Endothelial cell of umbilical vein (primary cell): ENCODE measurements at regions of chr2 and their contacts with region 1.

Region 1: GRCh38 chr2:164061129-164061746 is 325.4 kb upstream of the FIGN start:
- DNase-seq: peak; percentile 61
- H3K4me3 ChIP-seq: no peak overlapping the region
- H3K27ac ChIP-seq: no peak overlapping the region
- H3K4me1 ChIP-seq: no peaks in the 10 kb centered on the region
- H3K27me3 ChIP-seq: no peaks in the 10 kb centered on the region
- CTCF ChIP-seq: peak; percentile 53 to 58
- POLR2A ChIP-seq: no peak

Region 2: DNA sequence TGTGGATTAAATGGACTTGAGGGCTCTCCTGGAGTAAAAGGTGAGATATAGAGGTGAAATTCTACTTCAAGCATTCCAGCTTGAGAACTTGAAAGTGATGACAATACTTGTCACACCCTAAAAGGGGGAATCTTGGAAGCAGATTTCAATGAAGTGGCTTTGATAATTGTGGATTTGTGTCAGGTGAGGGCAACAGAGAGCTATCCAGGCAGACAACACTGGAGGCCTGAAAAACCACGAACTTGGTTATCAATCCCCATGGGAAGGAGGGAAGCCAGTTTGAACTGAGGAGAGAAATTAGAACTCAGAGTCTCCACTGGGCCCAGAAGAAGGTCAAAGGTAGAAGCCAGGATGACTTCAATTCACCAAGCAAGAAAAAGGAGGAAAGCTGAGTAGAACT is 589.3 kb before region 1 on chr2:
- CTCF ChIA-PET with region 1: interaction called, 29 read pairs
- POLR2A ChIA-PET with region 1: no interaction called
- dilution Hi-C with region 1: no loop called
- intact Hi-C with region 1: loop called (anchors 1 kb)
- DNase-seq: peak; percentile 18
- H3K4me3 ChIP-seq: no peak overlapping the region
- H3K27ac ChIP-seq: no peak overlapping the region
- H3K4me1 ChIP-seq: no peaks in the 10 kb centered on the region
- H3K27me3 ChIP-seq: peaks cover 2 to 3% of the 10 kb centered on the region in 2 experiments
- CTCF ChIP-seq: peak in 1 of 2 donors; percentile 22
- POLR2A ChIP-seq: no peak

Region 3: DNA sequence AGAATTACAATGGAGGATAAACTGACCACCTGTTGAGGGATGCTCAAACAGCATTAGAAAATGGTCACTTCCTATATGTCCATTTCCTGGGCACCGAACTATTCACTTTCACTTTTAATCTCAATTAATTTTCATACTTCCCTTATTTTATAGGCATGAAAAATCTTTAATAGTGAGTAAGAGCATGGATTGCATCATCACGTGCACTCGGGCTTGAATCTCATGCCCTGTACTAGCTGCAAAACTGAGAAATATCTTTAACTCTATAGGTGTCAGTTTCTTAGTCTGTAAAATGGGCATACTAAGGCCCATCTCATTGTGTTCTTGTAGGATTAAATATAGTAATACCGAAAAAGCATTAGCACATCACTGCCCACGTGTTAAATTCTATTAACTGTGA is 141.5 kb before region 1 on chr2:
- CTCF ChIA-PET with region 1: no interaction called
- POLR2A ChIA-PET with region 1: no interaction called
- dilution Hi-C with region 1: no loop called
- intact Hi-C with region 1: no loop called
- DNase-seq: no peak
- H3K4me3 ChIP-seq: no peak overlapping the region
- H3K27ac ChIP-seq: no peak overlapping the region
- H3K4me1 ChIP-seq: no peaks in the 10 kb centered on the region
- H3K27me3 ChIP-seq: no peaks in the 10 kb centered on the region
- CTCF ChIP-seq: no peak
- POLR2A ChIP-seq: no peak

Region 4: DNA sequence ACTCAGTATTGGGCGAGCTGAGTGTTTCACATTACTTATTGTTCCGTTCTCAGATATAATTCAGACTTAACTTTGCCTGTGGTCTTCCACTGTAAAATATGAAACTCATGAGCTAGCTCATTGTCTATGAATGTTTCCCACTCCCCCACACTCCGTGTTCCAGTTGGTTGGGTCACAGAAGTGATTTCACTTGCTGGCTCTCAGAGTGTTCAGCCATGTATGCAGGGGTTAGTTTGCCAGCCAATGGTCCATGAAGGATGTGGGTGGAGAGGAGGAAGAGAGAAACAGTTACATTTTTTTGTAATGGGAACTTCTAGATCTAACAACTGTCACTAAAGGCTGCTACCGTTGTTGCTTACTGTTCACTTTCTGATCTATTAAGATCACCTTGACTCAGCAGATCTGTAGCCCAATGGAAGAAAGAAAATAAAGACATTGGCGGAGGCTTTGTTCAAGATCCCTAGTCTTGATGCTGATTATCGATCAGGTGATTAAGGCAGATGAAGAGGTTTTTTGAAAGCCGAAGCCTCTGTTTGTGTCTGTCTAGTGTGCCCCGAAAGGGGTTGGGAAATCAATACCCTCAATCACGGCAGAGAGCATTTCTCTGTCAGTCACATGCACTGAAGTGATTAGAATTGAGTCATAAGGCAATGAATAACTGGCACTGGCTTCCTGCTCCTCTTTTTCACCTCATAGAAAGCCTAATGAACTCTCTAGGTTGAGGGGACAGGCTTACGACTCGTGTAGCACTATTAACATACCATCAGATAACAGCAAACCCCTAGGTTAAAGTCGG is 45.7 kb before region 1 on chr2:
- CTCF ChIA-PET with region 1: no interaction called
- POLR2A ChIA-PET with region 1: no interaction called
- dilution Hi-C with region 1: no loop called
- intact Hi-C with region 1: no loop called
- DNase-seq: no peak
- H3K4me3 ChIP-seq: no peak overlapping the region
- H3K27ac ChIP-seq: no peak overlapping the region
- H3K4me1 ChIP-seq: no peaks in the 10 kb centered on the region
- H3K27me3 ChIP-seq: no peaks in the 10 kb centered on the region
- CTCF ChIP-seq: no peak
- POLR2A ChIP-seq: no peak

Region 5: DNA sequence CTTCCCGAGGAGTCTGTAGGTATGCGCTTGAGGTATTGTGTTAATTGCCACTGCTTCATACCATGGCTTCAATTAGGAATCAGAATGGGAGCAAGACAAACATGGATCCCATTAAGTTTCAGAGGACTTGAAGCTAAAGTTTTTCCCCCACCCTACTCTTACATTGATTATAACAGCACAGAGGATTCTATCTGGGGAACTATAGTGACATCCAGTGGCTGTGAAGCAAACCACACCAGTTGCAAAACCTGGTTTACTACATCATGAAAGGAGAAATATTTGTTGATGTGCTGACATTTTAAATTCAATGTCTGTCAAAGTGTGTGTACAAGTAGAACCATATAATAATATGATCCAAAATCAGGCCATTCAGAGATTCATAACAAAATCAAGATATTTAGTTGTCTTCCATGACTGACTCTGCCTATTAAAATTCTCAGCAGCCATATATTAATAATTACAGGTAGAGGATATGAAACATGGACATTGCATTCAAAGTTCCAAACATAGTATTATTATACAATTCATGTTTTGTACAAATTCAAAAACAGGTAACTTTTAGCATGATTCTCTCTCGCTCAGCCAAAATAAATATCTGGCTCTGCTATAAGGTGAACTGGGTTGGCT is 477.1 kb after region 1 on chr2:
- CTCF ChIA-PET with region 1: interaction called, 6 read pairs
- POLR2A ChIA-PET with region 1: no interaction called
- dilution Hi-C with region 1: no loop called
- intact Hi-C with region 1: loop called (anchors 5 kb)
- DNase-seq: peak; percentile 56
- H3K4me3 ChIP-seq: no peak overlapping the region
- H3K27ac ChIP-seq: no peak overlapping the region
- H3K4me1 ChIP-seq: peaks cover 5% of the 10 kb centered on the region
- H3K27me3 ChIP-seq: no peaks in the 10 kb centered on the region
- CTCF ChIP-seq: peak; percentile 58 to 68
- POLR2A ChIP-seq: no peak